ENCODE measurements at regions of chr12 and their contacts with region 1.

Region 1: GRCh38 chr12:114508529-114509129 is 102.7 kb upstream of the TBX5 start:
- DNase-seq: no peak
- ATAC-seq: peak; percentile 54

Region 2: GRCh38 chr12:113980537-113981337 is 527.9 kb before region 1 on chr12:
- intact Hi-C with region 1: loop called (anchors 2 kb)
- DNase-seq: no peak
- ATAC-seq: peak; percentile 46